Activated B cell treated with CpG ODN at 0.5 μM for 24 hours (primary cell): ENCODE measurements at regions of chr5 and their contacts with region 1.

Region 1: GRCh38 chr5:10987930-10988504 is 227.0 kb upstream of the DAP start:
- DNase-seq: peak; percentile 24
- ATAC-seq: peak; percentile 65
- H3K4me3 Mint-ChIP-seq: no peak overlapping the region
- H3K27ac Mint-ChIP-seq: no peak overlapping the region
- H3K4me1 Mint-ChIP-seq: peaks cover 5% of the 10 kb centered on the region
- H3K27me3 Mint-ChIP-seq: peaks cover 35% of the 10 kb centered on the region
- CTCF ChIP-seq: no peak

Region 2: DNA sequence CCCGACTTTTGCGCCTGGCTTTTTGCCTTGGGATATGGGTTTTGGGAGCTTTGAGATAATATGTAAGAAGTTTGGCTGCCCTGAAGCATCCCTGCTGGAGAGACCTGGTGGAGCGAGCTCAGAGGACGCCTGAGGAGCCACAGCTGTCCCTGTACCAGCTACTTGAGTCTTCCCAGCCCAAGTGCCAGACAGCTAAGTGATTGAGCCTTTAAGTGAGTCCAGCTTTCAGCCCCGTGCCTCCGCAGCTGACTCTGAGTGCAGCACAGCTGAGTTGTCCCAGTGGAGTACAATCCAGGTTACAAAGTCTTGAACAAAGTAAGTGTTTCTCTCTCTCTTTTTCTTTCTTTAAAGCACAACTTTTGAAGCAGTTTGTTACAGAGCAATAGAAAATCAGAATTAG is 23.2 kb before region 1 on chr5:
- CTCF ChIA-PET with region 1: no interaction called
- POLR2A ChIA-PET with region 1: no interaction called
- intact Hi-C with region 1: no loop called
- DNase-seq: no peak
- ATAC-seq: no peak
- H3K4me3 Mint-ChIP-seq: no peak overlapping the region
- H3K27ac Mint-ChIP-seq: no peak overlapping the region
- H3K4me1 Mint-ChIP-seq: no peaks in the 10 kb centered on the region
- H3K27me3 Mint-ChIP-seq: no peaks in the 10 kb centered on the region
- CTCF ChIP-seq: no peak

Region 3: GRCh38 chr5:11182441-11183268 is 194.6 kb after region 1 on chr5:
- CTCF ChIA-PET with region 1: no interaction called
- POLR2A ChIA-PET with region 1: no interaction called
- intact Hi-C with region 1: loop called (anchors 10 kb)
- DNase-seq: no peak
- ATAC-seq: peak; percentile 28
- H3K4me3 Mint-ChIP-seq: no peak overlapping the region
- H3K27ac Mint-ChIP-seq: no peak overlapping the region
- H3K4me1 Mint-ChIP-seq: peaks cover 8% of the 10 kb centered on the region
- H3K27me3 Mint-ChIP-seq: no peaks in the 10 kb centered on the region
- CTCF ChIP-seq: no peak